BJ (cell line): ENCODE measurements at regions of chr19 and their contacts with region 1.

Region 1: DNA sequence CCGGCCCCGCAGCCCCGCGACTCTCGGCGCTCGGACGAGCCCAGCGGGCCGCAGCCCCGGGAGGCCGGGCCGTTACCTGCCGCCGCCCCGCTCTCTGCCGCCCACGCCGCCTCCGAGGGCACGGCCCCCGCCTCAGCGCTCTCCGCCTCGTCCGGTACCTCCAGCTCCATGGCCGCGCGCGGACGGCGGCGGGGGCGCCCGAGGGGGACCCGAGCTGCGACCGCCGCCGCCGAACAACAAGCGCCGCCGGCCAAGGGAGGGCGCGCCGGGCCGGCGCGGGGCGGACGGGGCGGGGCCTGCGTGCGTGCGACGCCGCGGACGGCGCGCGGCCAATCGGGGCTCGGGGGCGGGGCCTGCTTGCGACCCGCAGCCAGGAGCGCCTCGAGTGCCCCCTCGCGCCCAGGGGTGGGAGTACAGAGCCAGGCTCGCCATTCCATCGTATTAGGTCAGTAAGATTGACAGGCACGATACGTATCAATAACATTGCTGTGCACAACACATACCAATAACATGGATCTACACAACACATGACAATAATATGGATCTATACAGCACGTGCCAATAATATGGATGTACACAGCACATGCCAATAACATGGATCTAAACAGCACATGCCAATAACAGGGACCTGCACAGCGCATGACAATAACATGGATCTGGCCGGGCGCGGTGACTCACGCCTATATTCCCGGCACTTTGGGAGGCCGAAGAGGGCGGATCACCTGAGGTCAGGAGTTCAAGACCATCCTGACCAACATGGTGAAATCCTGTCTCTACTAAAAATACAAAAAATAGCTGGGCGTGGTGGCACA is at the start of gene PIP5K1C:
- DNase-seq: no peak
- H3K4me3 ChIP-seq: peak within 1 kb of the TSS; percentile 93
- H3K27me3 ChIP-seq: no peaks in the 10 kb centered on the region
- CTCF ChIP-seq: peak; percentile 77
- polyA plus RNA-seq, gene PIP5K1C: 14.2 and 35.3 TPM in 2 replicates

Region 2: GRCh38 chr19:3655402-3656072 is 44.9 kb before region 1 on chr19:
- CTCF ChIA-PET with region 1: interaction called, 10 read pairs
- POLR2A ChIA-PET with region 1: no interaction called
- DNase-seq: peak; percentile 82
- H3K4me3 ChIP-seq: no peak overlapping the region
- H3K27me3 ChIP-seq: no peaks in the 10 kb centered on the region
- CTCF ChIP-seq: no peak

Region 3: DNA sequence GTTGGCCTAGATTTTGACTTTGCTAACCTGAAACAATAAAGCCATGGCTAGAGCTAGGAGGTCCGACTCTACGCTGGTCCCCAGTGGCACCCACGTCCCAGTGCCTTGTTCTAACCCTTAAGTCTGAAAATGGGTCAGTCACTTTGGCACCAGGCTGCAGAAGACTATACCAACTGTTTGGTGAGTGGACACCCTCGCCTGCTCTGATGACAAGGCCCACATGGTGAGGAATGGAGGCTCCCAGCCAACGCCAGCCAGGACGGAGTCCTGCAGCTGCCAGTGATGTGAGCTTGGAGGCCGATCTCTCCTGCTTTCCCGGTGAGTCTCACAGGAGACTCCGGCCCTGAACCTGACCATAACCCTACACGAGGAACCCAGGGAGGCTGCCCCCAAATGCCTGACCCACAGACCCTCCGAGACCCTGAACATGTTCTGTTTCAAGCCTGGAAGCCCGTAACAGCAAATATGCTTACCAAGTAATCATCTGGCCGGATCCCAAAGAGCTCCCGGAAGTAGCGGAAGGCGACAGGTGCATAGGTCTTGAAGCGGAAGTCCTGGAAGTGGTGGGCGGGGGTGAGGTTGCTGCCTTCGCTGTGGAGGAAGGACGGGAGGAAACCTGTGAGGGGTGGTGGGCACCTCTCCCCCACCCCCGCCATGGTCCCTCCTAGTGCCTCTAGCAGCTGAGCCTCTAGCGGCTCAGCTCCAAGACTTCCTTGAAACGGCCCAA is 39.8 kb before region 1 on chr19:
- CTCF ChIA-PET with region 1: interaction called, 99 read pairs
- POLR2A ChIA-PET with region 1: no interaction called
- DNase-seq: no peak
- H3K4me3 ChIP-seq: no peak overlapping the region
- H3K27me3 ChIP-seq: no peaks in the 10 kb centered on the region
- CTCF ChIP-seq: no peak

Region 4: DNA sequence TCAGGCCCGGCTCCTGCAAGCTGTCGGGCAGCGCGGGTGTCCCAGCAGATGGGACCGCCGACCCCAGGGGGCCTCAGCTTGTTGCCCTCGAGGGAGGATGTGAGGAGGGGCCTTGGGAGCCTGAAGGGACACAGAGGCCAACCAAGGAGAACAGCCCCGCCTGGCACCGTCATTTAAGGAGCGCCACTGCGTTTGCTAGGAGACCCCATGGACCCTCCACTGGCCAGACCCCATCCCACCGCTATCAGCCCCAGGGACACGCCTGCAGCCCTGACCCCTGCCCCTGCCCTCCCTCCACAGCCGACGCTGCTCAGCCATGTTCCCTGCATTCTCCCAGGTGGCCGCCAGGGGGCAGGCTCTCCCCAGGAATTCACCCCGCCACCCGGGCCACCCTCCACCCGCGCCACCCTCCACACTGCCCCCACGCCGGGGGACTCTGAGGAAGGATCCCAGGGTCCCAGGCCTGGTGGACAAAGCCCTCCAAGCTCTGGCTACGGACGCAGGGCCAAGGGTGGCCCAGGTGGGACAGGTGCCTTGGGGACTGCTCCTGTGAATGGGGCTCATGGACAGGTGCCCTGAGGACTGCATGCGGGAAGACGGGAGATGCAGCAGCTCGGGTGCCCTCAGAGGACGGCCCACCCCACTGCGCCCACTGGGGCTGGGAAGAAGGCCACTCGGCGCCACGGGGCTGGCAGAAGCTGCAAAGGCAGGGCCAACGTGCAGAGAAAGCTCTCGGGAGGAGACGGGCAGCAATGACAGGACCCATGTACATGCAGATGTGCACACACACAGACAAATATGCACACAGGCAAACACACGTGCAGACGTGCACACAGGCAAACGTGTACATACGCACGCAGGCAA is 34.5 kb before region 1 on chr19:
- CTCF ChIA-PET with region 1: interaction called, 99 read pairs
- POLR2A ChIA-PET with region 1: interaction called, 3 read pairs
- DNase-seq: no peak
- H3K4me3 ChIP-seq: no peak overlapping the region
- H3K27me3 ChIP-seq: no peaks in the 10 kb centered on the region
- CTCF ChIP-seq: peak; percentile 94

Region 5: GRCh38 chr19:3670796-3671679 is 29.4 kb before region 1 on chr19:
- CTCF ChIA-PET with region 1: interaction called, 99 read pairs
- POLR2A ChIA-PET with region 1: interaction called, 3 read pairs
- DNase-seq: peak; percentile 36
- H3K4me3 ChIP-seq: peak overlapping the region; percentile 33
- H3K27me3 ChIP-seq: no peaks in the 10 kb centered on the region
- CTCF ChIP-seq: no peak

Region 6: DNA sequence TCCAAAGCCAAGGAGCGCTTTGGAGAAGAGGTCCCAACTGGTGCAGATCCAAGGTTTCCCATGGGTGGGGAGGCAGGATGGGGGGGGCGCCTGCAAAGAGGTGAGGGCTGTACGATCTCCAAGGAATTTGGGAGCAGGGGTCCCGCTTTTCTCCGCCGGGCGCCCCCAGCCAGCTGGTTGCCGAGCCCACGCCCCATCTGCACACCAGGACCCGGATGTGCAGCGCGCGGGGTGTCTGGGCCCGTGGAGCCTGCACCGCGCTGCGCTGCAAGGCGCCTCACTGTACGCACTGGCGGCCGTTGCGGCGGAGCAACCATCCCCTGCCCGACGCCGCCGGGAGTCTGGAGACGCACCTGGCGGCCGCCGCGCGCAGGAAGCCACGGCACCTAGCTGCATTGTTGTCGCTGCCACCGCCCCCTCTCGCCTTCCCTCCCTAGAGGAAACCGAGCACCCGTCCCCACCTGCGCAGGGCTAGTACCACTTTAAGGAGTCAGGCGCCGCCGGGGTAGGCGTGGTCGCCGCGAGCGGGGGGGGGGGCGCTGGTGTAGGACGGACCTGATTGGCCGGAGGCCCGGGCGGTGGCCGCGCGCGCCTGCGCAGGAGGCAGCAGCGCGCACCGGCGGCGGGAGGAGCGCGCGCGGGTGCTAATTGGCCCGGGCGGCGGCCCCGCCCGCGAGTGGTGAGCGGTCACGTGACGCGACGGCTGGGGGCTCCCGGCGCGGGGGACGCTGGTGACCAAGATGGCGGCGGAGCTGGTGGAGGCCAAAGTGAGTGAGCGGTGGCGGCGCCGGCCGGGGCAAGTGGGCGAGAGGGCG is 306.8 kb after region 1 on chr19 and contains the start of gene PIAS4:
- CTCF ChIA-PET with region 1: no interaction called
- POLR2A ChIA-PET with region 1: interaction called, 21 read pairs
- DNase-seq: peak; percentile 67
- H3K4me3 ChIP-seq: peak within 1 kb of the TSS; percentile 87
- H3K27me3 ChIP-seq: no peaks in the 10 kb centered on the region
- CTCF ChIP-seq: no peak
- polyA plus RNA-seq, gene PIAS4: 10.9 and 18.2 TPM in 2 replicates